Dendritic cell treated with granulocyte-macrophage colony-stimulating factor and Interleukin-4, amounts not matched to agents 40 ng/mL and 50 ng/mL, for 4 days (primary cell): ENCODE measurements at regions of chr15 and their contacts with region 1.

Region 1: DNA sequence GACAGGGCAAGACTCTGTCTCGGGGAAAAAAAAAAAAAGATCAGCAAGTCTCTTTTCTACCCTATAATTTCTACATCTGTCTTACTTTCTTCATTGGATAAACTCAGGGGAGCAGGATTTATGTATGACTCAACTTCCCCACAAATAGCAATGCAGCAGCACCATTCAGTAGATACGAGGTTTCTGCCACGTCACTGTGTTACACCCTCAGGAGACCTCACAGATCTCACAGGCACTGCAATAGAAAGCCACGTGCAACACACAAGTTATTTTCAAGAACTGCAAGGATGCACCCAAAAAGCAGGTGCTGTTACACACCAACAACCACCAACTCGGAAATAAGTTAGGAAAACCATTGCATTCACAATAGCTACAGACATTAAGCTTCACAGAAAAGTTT is 30.2 kb downstream of the TSPAN3 start:
- H3K4me3 Mint-ChIP-seq: no peak overlapping the region
- H3K27ac Mint-ChIP-seq: no peak overlapping the region
- H3K4me1 Mint-ChIP-seq: peaks cover 28% of the 10 kb centered on the region
- H3K27me3 Mint-ChIP-seq: no peaks in the 10 kb centered on the region

Region 2: DNA sequence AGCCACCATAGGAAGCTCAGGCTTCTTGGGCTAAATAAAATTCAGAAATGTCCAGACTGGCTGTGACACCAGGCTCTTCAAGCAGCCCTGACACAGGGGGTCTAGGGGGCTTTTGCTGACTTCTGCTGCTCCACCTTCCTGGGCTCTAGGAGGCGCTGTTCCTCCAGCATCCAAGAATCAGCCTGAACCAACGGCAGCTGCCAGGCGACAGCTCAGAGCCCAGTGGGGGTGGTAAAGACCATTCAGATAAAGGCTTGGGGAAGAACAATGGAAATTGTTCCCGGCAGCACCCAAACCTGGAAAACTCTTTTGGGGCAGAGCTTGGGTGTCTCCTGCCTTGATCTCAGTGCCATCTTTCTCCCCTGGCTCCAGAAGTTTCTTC is 67.3 kb before region 1 on chr15:
- intact Hi-C with region 1: no loop called
- H3K4me3 Mint-ChIP-seq: no peak overlapping the region
- H3K27ac Mint-ChIP-seq: peak overlapping the region; percentile 26
- H3K4me1 Mint-ChIP-seq: peaks cover 37% of the 10 kb centered on the region
- H3K27me3 Mint-ChIP-seq: no peaks in the 10 kb centered on the region

Region 3: GRCh38 chr15:77094397-77095030 is 53.8 kb after region 1 on chr15:
- intact Hi-C with region 1: loop called (anchors 10 kb)
- H3K4me3 Mint-ChIP-seq: no peak overlapping the region
- H3K27ac Mint-ChIP-seq: no peak overlapping the region
- H3K4me1 Mint-ChIP-seq: peaks cover 16% of the 10 kb centered on the region
- H3K27me3 Mint-ChIP-seq: no peaks in the 10 kb centered on the region